HEK293 (cell line): ENCODE measurements at regions of chr15 and their contacts with region 1.

Region 1: GRCh38 chr15:81265944-81266775 is 57.8 kb downstream of the STARD5 start:
- H3K4me3 ChIP-seq: peak overlapping the region; percentile 4; the same call in 1 of the 2 replicates
- H3K27ac ChIP-seq: no peak overlapping the region
- H3K4me1 ChIP-seq: no peaks in the 10 kb centered on the region
- CTCF ChIP-seq: peak; percentile 86

Region 2: DNA sequence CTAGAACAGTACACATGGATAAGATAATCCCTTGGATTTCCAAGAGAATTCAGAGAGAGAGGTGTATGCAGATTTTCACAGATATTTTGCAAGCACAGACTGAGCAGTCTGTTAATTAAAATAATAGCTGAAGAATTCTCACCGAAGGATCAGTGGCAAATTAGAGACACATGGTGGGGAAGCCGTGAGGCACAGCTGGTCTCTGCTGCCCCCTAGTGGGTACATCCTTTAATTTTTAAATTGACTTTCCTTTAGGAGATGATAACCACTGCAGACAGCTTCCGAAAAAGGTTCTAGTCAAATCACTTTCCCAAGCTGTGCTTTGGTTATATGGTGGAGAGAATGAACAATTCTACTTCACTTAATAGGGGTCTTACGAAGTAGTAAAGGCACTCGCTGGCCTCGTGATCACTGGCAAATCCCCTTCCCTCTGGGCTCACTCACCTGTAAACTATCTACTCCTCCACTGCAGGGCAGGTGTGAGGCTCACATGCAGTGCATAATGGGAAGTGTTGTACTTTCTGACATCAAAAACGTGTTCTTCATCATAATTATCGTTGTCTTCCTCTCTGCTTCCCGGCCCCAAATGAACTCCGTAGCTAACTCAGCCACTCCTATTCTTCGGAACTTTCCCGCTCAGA is 296.0 kb before region 1 on chr15:
- CTCF ChIA-PET with region 1: interaction called, 162 read pairs
- POLR2A ChIA-PET with region 1: no interaction called
- H3K4me3 ChIP-seq: no peak overlapping the region
- H3K27ac ChIP-seq: no peak overlapping the region
- H3K4me1 ChIP-seq: no peaks in the 10 kb centered on the region
- CTCF ChIP-seq: peak; percentile 42; the same call in 1 of the 2 replicates

Region 3: GRCh38 chr15:81080996-81081395 is 185.2 kb before region 1 on chr15:
- CTCF ChIA-PET with region 1: interaction called, 18 read pairs
- POLR2A ChIA-PET with region 1: no interaction called
- H3K4me3 ChIP-seq: no peak overlapping the region
- H3K27ac ChIP-seq: no peak overlapping the region
- H3K4me1 ChIP-seq: no peaks in the 10 kb centered on the region
- CTCF ChIP-seq: no peak

Region 4: DNA sequence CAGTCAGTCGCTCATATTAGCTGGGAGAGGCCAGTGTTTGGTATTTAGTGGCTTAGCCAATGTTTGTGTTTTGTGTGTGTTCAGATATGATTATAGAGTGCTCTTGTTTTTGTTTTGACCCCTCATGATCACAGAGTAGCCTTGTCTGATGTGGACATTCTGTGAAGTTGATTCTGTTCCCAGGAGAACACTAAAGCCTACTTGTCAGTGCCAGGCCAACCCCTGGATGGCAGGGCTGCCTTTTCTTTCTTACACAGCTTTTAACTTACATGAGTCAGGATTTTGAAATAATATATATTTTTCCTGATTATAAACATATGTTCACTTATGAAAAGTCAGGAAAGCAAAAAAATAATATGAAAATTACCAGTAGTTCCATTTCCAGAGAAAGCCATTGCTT is 120.2 kb before region 1 on chr15:
- CTCF ChIA-PET with region 1: interaction called, 201 read pairs
- POLR2A ChIA-PET with region 1: no interaction called
- H3K4me3 ChIP-seq: no peak overlapping the region
- H3K27ac ChIP-seq: no peak overlapping the region
- H3K4me1 ChIP-seq: peaks cover 3% of the 10 kb centered on the region
- CTCF ChIP-seq: no peak

Region 5: DNA sequence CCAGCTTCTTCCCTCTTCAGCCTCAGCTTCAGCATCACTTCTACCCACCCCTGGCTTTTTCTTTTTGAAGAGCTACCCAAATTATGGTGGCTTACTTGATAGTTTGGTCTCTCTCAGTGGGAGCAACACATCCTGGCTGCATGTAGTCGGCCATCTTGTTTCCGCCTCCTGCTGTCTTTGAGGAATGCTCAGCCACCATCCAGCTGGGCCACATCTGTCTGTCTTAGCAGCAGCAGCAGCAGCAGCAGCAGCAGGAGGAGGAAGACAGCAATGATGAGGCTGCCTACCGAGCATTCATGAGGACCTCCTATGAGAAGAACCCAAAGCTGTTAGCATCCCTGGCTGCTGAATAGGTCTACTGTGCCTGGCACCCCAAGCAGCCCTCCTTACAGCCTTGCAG is 49.7 kb before region 1 on chr15:
- CTCF ChIA-PET with region 1: interaction called, 29 read pairs
- POLR2A ChIA-PET with region 1: interaction called, 3 read pairs
- H3K4me3 ChIP-seq: no peak overlapping the region
- H3K27ac ChIP-seq: no peak overlapping the region
- H3K4me1 ChIP-seq: no peaks in the 10 kb centered on the region
- CTCF ChIP-seq: no peak

Region 6: GRCh38 chr15:81388436-81388770 is 122.2 kb after region 1 on chr15:
- CTCF ChIA-PET with region 1: interaction called, 31 read pairs
- POLR2A ChIA-PET with region 1: no interaction called
- H3K4me3 ChIP-seq: no peak overlapping the region
- H3K27ac ChIP-seq: no peak overlapping the region
- H3K4me1 ChIP-seq: no peaks in the 10 kb centered on the region
- CTCF ChIP-seq: no peak

Region 7: DNA sequence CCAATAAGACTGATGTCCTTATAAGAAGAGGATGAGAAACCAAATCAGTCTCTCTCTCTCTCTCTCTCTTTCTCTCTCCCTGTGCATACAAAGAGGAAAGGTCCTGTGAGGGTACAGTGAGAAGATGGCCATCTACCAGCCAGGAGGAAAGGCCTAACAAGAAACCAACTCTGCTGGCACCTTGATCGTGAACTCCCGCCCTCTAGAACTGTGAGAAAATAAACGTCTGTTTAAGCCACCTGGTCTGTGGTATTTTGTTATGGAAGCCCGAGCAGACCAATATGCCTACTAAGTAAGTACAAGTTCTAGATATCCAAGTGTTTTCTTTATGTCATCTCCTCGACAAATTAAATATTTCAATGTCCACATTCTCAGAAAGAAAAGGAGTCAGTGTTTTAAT is 152.7 kb after region 1 on chr15:
- CTCF ChIA-PET with region 1: no interaction called
- POLR2A ChIA-PET with region 1: no interaction called
- H3K4me3 ChIP-seq: no peak overlapping the region
- H3K27ac ChIP-seq: peak overlapping the region; percentile 6; the same call in 1 of the 2 replicates
- H3K4me1 ChIP-seq: peaks cover 9% of the 10 kb centered on the region; the same call in 1 of the 2 replicates
- CTCF ChIP-seq: no peak